Spleen (tissue), 13 donors: ENCODE measurements at regions of chr3 and their contacts with region 1.

Region 1: GRCh38 chr3:17841190-17841828 is 98.9 kb upstream of the TBC1D5 start:
- DNase-seq: peak; percentile 92
- H3K4me3 ChIP-seq: no peak overlapping the region
- H3K27ac ChIP-seq: no peak overlapping the region
- H3K4me1 ChIP-seq: peaks cover 0 to 7% (median 2%) of the 10 kb centered on the region in 6 donors
- H3K27me3 ChIP-seq: no peaks in the 10 kb centered on the region
- CTCF ChIP-seq: peak; percentile 75 to 94 (median 89)
- POLR2A ChIP-seq: no peak

Region 2: DNA sequence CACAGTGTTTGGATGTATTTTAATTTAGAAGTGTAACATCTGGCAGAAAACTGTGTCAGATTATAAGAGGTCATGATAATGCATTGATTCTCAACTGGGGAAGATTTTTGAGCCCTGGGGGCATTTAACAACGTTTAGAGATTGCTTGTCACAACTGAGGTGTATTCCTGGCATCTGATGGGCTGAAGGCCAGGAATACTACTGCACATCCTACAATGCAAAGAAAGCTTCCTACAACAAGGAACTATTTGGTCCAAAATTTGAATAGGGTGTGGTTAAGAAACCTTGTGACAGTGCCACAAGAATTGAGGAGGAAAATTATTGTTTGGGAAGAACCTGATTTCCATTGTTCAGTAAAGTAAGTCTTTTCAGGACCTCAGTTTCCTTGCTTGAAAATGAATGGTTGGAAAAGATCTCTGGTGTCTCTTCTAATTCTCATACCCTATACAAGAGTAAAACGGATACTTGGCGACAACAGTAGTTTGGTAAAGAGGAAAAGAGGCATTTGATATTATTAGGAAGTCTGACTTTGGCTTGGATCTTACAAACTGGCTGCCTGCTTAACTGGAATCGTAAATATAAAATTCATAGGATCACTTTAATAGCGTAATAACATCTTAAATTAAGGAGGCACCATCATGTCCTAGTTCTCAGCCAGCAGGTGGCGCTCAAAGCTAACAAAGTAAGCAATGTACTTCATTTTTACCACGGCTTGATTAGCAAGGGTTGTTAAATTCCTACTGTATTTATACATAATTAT is 1240.3 kb before region 1 on chr3:
- intact Hi-C with region 1: loop called (anchors 10 kb)
- DNase-seq: peak; percentile 92
- H3K4me3 ChIP-seq: no peak overlapping the region
- H3K27ac ChIP-seq: no peak overlapping the region
- H3K4me1 ChIP-seq: peaks cover 0 to 8% (median 0%) of the 10 kb centered on the region in 6 donors
- H3K27me3 ChIP-seq: no peaks in the 10 kb centered on the region
- CTCF ChIP-seq: peak; percentile 56 to 88 (median 80)
- POLR2A ChIP-seq: no peak

Region 3: DNA sequence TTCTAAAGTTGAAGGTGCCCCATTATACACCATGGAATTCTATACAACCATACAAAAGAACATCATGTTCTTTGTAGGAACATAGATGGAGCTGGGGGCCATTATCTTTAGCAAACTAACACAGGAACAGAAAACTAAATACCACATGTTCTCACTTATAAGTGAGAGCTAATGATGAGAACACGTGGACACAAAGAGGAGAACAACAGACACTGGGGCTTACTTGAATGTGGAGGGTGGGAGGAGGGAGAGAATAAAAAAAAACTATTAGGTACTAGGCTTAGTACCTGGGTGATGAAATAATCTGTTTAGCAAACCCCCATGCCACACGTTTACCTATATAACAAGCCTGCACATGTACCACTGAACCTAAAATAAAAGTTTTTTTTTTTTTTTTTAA is 613.8 kb before region 1 on chr3:
- intact Hi-C with region 1: no loop called
- DNase-seq: no peak
- H3K4me3 ChIP-seq: no peak overlapping the region
- H3K27ac ChIP-seq: no peak overlapping the region
- H3K4me1 ChIP-seq: peaks cover 0 to 11% (median 0%) of the 10 kb centered on the region in 6 donors
- H3K27me3 ChIP-seq: no peaks in the 10 kb centered on the region
- CTCF ChIP-seq: no peak
- POLR2A ChIP-seq: no peak

Region 4: DNA sequence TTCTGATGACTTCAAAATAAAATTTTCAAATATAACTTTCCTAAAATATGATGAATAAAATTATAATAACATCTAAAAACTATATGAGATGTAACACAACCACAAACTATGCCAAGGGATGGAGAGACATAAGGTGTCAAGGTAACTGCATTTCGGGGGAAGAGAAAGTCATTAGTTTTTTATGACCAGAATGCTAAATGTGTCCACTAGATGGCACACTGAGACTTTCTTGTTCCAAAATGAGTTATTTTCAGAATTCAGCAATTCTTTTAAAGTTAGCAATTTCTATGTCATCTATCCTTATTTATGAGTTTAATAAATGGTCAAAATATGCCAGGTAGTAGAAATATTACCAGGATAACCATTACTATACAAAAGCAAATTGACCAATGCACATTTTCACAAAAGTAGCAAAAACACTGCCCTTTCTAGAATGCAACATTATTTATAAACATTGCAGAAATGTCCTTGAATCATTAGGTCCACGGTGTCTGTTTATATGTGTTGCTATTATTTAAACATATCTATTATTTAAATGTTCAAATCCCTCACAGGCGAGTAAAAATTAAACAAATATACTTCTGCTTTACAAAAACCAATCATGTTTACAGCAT is 582.4 kb before region 1 on chr3:
- intact Hi-C with region 1: loop called (anchors 5 kb)
- DNase-seq: no peak
- H3K4me3 ChIP-seq: no peak overlapping the region
- H3K27ac ChIP-seq: no peak overlapping the region
- H3K4me1 ChIP-seq: peaks cover 0 to 7% (median 2%) of the 10 kb centered on the region in 6 donors
- H3K27me3 ChIP-seq: no peaks in the 10 kb centered on the region
- CTCF ChIP-seq: peak in 10 of 11 experiments; percentile 25 to 74 (median 64)
- POLR2A ChIP-seq: no peak

Region 5: GRCh38 chr3:17431004-17431403 is 410.3 kb before region 1 on chr3:
- intact Hi-C with region 1: loop called (anchors 5 kb)
- DNase-seq: no peak
- H3K4me3 ChIP-seq: no peak overlapping the region
- H3K27ac ChIP-seq: no peak overlapping the region
- H3K4me1 ChIP-seq: peaks cover 0 to 9% (median 0%) of the 10 kb centered on the region in 6 donors
- H3K27me3 ChIP-seq: no peaks in the 10 kb centered on the region
- CTCF ChIP-seq: peak in 8 of 11 experiments; percentile 17 to 49 (median 38)
- POLR2A ChIP-seq: no peak

Region 6: DNA sequence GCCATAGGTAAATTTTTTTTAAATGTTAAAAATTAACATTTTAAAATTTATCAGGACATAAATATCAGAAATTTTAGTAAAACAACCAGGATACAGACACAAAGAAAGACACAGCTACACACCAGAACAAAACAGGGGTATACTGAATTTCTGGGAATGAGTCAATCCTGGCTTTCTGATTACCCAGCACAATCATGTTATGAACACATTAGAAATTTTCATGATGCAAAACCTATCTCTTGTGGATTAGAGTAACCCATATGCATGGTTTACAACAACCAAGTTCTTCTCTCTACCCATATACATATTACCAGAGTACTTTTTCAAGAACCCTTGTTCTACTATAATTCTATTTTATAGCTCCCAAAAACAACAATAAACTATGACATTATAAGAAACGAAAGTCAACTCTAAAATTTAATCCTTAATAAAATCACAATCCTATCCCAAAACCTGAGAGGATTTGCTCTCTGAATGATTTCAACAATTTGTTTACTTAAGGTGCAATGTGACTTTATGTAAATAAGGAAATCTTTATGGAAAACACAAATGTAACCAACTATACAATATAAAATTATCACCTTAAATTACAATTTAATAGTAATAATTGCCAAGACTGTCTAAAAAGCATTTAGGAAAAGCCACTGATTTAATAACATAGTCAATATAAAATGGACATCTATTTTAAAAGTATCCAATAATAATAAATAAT is 283.4 kb before region 1 on chr3:
- intact Hi-C with region 1: no loop called
- DNase-seq: no peak
- H3K4me3 ChIP-seq: no peak overlapping the region
- H3K27ac ChIP-seq: no peak overlapping the region
- H3K4me1 ChIP-seq: no peaks in the 10 kb centered on the region
- H3K27me3 ChIP-seq: no peaks in the 10 kb centered on the region
- CTCF ChIP-seq: no peak
- POLR2A ChIP-seq: no peak

Region 7: DNA sequence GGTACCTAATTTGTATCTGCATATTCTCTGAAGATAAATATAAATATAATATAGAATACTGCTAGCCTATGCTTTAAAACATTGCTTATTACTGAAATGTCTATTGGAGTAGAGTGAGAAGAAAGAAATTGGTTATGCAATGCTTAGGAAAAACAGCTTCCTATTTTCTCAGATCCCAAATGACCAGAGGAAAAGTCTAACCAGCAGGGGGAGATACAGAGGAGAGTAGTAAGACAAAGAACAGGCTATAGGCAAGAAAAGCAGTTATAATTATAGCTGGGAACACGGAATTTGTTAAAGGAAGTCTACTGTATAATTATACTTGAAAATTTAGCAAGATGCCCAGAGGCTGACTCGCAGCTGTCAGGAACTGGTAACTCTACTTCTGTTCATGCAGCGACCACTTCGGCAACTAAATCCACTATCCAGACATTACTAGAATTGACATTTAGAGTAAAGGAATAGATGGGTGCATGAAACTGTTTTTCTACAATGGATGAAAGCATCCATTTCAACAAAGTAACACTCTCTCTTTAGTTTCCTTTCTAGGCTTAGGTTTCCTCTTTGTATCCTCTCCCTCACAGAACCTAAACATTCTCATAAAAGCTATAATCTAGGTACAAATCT is 196.1 kb before region 1 on chr3:
- intact Hi-C with region 1: loop called (anchors 10 kb)
- DNase-seq: no peak
- H3K4me3 ChIP-seq: no peak overlapping the region
- H3K27ac ChIP-seq: no peak overlapping the region
- H3K4me1 ChIP-seq: peaks cover 0 to 30% (median 10%) of the 10 kb centered on the region in 6 donors
- H3K27me3 ChIP-seq: no peaks in the 10 kb centered on the region
- CTCF ChIP-seq: peak in 10 of 11 experiments; percentile 50 to 76 (median 66)
- POLR2A ChIP-seq: no peak